Heart left ventricle (tissue), 16 donors: ENCODE measurements at regions of chr13 and their contacts with region 1.

Region 1: GRCh38 chr13:104773775-104774174 is 1707.6 kb upstream of the SLC10A2 start:
- DNase-seq: no peak
- ATAC-seq: no peak
- H3K4me3 ChIP-seq: no peak overlapping the region
- H3K27ac ChIP-seq: no peak overlapping the region
- H3K4me1 ChIP-seq: peaks cover 0 to 4% (median 0%) of the 10 kb centered on the region in 12 donors
- H3K27me3 ChIP-seq: no peaks in the 10 kb centered on the region
- CTCF ChIP-seq: peak; percentile 25 to 70 (median 49)
- POLR2A ChIP-seq: no peak

Region 2: DNA sequence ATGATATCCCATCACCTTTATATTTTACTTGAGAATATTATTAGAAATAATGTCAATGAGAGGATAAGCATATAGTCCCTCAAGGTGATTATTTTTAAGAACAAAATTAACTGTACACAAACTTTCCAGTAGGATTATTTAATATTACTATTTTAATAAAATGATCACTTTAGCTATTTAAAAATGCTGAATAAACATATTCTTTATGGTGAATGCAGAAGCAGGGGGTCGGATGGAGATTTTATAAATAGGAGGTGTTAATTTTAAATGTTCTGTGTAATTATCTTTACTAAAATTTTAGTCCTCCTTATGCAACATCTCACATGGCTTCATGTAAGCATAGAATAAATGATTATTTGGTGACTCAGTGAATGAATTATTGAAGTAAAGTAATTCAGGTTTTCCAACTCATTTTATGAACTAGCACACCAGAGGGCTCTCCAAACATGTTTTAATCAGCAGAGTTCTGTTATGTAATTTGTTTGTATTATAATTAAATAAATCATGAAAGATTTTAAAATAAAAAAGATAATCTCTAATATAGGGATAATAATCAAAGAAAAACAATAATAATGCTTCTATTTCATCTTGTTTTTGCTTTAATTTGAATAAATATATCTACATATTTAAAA is 126.5 kb after region 1 on chr13:
- intact Hi-C with region 1: no loop called
- DNase-seq: no peak
- ATAC-seq: no peak
- H3K4me3 ChIP-seq: no peak overlapping the region
- H3K27ac ChIP-seq: no peak overlapping the region
- H3K4me1 ChIP-seq: no peaks in the 10 kb centered on the region
- H3K27me3 ChIP-seq: no peaks in the 10 kb centered on the region
- CTCF ChIP-seq: peak in 1 of 12 donors; percentile 20
- POLR2A ChIP-seq: no peak

Region 3: GRCh38 chr13:105202354-105202753 is 428.6 kb after region 1 on chr13:
- intact Hi-C with region 1: loop called in 2 of 10 experiments (anchors 5 kb)
- DNase-seq: no peak
- ATAC-seq: no peak
- H3K4me3 ChIP-seq: no peak overlapping the region
- H3K27ac ChIP-seq: no peak overlapping the region
- H3K4me1 ChIP-seq: no peaks in the 10 kb centered on the region
- H3K27me3 ChIP-seq: no peaks in the 10 kb centered on the region
- CTCF ChIP-seq: peak; percentile 24 to 61 (median 43)
- POLR2A ChIP-seq: no peak

Region 4: DNA sequence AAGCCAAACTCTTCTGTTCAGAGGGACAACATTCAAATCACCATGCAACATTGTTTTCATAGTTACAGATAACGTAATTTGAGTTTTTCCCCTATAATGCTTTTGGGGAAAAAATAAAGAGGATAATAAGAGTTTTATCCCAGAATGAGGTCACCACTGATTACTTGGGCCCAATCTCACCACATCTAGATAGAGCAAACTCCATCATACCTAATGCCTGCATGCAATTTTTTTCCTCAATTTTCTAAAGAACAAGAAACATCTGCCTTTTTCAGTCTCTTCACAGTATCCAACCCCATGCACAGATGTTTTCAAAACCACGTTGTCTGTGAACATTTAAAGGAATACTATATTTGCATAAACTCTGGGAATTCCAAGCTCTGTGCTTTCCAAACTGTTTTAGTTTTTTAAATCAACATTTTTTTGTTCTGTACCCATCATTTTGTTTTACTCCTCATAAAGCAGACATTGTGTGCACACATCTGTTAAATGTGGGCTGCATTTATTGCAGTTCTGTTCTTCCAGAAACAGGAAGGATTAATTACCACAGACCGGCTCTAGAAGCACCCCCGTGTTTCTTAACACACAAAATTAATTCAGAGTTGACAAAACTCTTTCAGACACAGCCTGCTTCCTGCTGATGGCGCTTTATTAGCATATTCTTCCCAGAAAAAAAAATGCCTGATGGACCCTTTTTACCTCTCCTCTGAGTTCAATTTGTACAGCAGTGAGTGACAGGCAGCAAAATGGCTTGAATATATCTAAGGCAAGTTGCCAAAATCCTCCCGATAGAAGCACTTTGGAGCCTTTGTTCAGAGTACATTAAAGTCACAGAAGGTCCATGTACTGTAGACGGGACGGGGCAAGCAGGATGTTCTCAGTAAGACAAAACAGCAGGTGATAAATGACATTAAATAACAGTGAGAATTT is 589.8 kb after region 1 on chr13:
- intact Hi-C with region 1: no loop called
- DNase-seq: no peak
- ATAC-seq: no peak
- H3K4me3 ChIP-seq: no peak overlapping the region
- H3K27ac ChIP-seq: no peak overlapping the region
- H3K4me1 ChIP-seq: peaks cover 0 to 3% (median 0%) of the 10 kb centered on the region in 12 donors
- H3K27me3 ChIP-seq: no peaks in the 10 kb centered on the region
- CTCF ChIP-seq: no peak
- POLR2A ChIP-seq: no peak